ENCODE measurements at regions of chr7 and their contacts with region 1.

Region 1: DNA sequence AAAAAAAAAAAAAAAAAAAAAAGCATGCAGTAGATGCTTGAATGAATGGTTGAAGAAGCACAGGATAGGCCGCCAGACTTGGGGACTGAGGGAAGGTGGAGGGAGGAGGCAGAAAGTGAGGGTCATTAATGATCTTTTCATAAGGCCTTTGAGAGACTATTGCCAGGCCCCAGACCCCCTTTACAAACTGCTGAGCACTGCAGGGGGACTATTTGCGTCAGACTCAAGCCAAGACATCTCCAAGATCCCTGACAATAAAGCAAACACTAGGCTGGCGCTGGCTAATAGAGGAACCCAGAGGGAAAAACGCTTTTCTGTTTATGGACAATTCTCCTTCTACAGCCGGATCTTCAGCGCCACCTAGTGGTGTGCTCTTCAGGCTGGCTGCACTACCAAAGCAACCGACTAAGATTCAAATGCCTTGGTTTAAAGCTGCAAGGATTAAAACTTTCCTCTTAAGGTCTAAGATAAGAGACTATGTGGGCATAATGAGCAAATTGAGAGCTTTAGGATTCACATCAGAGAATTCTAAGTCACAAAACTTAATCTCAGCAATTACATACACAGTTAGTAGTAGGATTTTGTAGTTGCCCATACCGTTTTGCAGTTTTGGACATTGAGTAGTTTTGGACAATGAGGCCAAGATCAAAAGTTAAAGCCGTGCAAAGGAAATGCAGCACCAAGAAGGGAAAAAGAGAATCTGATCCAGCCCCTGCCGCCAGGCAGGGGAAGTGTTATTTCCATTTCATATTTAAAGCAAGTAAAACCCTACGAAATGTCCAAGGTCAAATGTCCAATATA is 17.9 kb upstream of the AGK start:
- DNase-seq: peak; percentile 68
- ATAC-seq: peak; percentile 51
- H3K4me3 Mint-ChIP-seq: no peak overlapping the region
- H3K27ac Mint-ChIP-seq: no peak overlapping the region
- H3K4me1 Mint-ChIP-seq: no peaks in the 10 kb centered on the region
- H3K27me3 Mint-ChIP-seq: peaks cover 20% of the 10 kb centered on the region

Region 2: DNA sequence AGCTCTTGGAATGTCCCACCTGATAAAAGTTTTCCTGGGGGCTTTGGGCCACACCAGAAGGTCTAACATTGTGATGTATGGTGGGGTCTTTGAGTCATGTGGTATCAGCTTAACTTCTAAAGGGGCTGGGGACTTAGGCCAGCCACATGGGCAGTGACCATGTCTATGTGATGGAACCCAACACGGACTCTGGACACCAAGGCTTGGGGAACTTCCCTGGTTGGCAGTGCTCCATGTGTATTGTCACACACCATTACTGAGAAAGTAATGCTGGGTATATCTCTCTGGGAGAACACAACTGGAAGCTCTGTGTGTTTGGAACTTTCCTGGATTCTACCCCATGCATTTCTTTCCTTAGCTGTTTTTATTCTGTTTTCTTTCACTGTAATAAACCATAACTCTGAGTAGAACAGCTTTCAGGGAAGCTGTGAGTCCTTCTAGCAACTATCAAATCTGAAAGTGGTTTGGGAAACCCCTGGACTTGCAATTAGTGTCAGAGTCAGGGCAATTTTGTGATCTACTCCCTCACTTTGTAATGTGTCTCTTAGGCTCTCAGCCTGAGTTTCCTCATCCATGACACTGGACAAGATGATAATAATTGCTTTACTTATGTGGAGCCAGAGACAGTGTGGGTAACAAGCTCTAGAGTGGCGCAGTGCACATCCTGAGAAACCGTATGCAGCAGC is 10.5 kb before region 1 on chr7:
- CTCF ChIA-PET with region 1: interaction called, 22 read pairs
- POLR2A ChIA-PET with region 1: no interaction called
- DNase-seq: no peak
- ATAC-seq: no peak
- H3K4me3 Mint-ChIP-seq: no peak overlapping the region
- H3K27ac Mint-ChIP-seq: no peak overlapping the region
- H3K4me1 Mint-ChIP-seq: no peaks in the 10 kb centered on the region
- H3K27me3 Mint-ChIP-seq: peaks cover 12% of the 10 kb centered on the region

Measured in activated CD8-positive, alpha-beta T cell treated with anti-CD3 and anti-CD28 coated beads, Interleukin-2, amount 10 ng/mL, durations not matched to agents 7 days and 5 days (primary cell).